Activated CD4-positive, alpha-beta T cell treated with anti-CD3 and anti-CD28 coated beads, Interleukin-2, amount 10 ng/mL, durations not matched to agents 7 days and 5 days (primary cell): ENCODE measurements at regions of chr1 and their contacts with region 1.

Region 1: GRCh38 chr1:84944767-84945486 is 51.9 kb upstream of the LPAR3 start:
- DNase-seq: peak; percentile 91
- H3K4me3 Mint-ChIP-seq: peak overlapping the region; percentile 77
- H3K27ac Mint-ChIP-seq: peak overlapping the region; percentile 89
- H3K4me1 Mint-ChIP-seq: peaks cover 23% of the 10 kb centered on the region
- H3K27me3 Mint-ChIP-seq: no peaks in the 10 kb centered on the region

Region 2: DNA sequence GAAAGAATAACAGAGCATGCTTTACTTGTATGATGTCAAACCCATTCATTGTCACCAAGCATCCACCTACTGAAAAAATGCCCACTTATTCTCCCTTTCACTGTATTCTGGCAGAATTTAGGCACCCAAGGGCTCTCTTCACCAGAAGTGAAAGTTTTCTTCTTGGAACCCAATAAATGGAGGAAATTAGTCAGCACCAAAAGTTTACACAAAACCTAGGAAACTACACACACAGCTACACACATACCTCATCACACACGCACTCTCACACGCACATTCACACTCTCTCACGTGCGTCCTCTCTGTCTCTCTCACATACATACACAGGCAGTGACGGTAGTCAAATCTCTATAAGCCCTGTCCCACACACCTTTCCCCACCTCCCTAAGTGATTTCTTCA is 14.4 kb after region 1 on chr1:
- CTCF ChIA-PET with region 1: interaction called, 14 read pairs
- POLR2A ChIA-PET with region 1: no interaction called
- DNase-seq: peak; percentile 47
- H3K4me3 Mint-ChIP-seq: no peak overlapping the region
- H3K27ac Mint-ChIP-seq: peak overlapping the region; percentile 27
- H3K4me1 Mint-ChIP-seq: peaks cover 20% of the 10 kb centered on the region
- H3K27me3 Mint-ChIP-seq: no peaks in the 10 kb centered on the region

Region 3: DNA sequence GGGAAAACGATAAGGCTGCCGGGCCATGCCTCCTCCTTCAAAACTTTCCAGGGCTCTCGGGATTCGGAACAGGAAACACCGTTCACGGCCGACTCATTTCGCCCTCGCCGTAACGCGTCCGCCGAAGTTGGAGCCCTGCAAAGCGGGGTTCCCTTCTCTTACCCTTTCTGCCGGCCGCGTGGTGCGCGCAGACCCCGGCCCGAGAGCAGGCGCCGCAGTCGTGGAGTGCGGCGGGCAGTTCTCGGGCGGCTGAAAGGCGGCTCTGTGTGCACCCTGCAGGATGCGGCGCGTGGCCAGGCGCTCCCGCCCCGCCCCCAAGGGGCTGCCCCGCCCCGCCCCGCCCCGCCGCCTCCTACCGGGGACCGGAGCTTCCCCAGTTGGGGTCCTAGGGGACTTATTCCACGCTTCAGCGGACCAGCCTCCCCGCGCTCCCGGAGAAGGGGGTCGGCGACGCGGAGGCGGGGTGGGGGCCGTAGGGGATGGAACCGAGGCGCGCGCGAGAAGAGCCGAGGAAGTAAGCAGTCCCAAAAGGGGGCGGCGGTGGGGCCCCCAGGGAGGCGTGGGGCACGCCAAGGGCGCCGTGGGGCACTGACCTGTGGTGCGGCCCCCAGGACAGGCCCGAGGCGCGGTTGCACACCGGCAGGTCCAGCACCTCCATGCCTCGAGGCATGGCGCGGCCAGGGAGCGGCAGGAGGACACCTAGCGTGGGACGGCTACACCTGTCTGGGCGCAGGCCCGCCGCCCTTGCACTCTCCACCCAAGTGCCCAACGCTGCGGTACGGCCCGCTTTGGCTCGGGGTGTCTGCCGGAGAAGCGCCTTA is 52.1 kb after region 1 on chr1 and contains the start of gene MCOLN2:
- CTCF ChIA-PET with region 1: interaction called, 13 read pairs
- POLR2A ChIA-PET with region 1: no interaction called
- DNase-seq: peak; percentile 60
- H3K4me3 Mint-ChIP-seq: peak within 1 kb of the TSS; percentile 75
- H3K27ac Mint-ChIP-seq: peak within 1 kb of the TSS; percentile 83
- H3K4me1 Mint-ChIP-seq: peaks cover 58% of the 10 kb centered on the region
- H3K27me3 Mint-ChIP-seq: peaks cover 36% of the 10 kb centered on the region
- total RNA-seq, gene MCOLN2: 15.0 to 15.4 TPM

Region 4: GRCh38 chr1:85027242-85027983 is 82.5 kb after region 1 on chr1:
- CTCF ChIA-PET with region 1: interaction called, 20 read pairs
- POLR2A ChIA-PET with region 1: no interaction called
- DNase-seq: peak; percentile 14
- H3K4me3 Mint-ChIP-seq: no peak overlapping the region
- H3K27ac Mint-ChIP-seq: peak overlapping the region; percentile 85
- H3K4me1 Mint-ChIP-seq: peaks cover 13% of the 10 kb centered on the region
- H3K27me3 Mint-ChIP-seq: no peaks in the 10 kb centered on the region